HepG2 (cell line): ENCODE measurements at regions of chr3 and their contacts with region 1.

Region 1: GRCh38 chr3:157130467-157131251 is 29.3 kb downstream of the CCNL1 start:
- DNase-seq: peak; percentile 90
- ATAC-seq: peak; percentile 47
- H3K4me3 ChIP-seq: peak overlapping the region; percentile 53 to 76 (median 57)
- H3K27ac ChIP-seq: peak overlapping the region; percentile 96
- H3K4me1 ChIP-seq: peaks cover 95% of the 10 kb centered on the region
- H3K27me3 ChIP-seq: no peaks in the 10 kb centered on the region
- CTCF ChIP-seq: peak; percentile 80
- EP300 ChIP-seq: peak in 1 of 2 experiments; percentile 82; a peak in 2 of 4 replicates
- POLR2A ChIP-seq: peak in 1 of 2 experiments; percentile 50; a peak in 1 of 4 replicates
- RAD21 ChIP-seq: peak; percentile 82

Region 2: DNA sequence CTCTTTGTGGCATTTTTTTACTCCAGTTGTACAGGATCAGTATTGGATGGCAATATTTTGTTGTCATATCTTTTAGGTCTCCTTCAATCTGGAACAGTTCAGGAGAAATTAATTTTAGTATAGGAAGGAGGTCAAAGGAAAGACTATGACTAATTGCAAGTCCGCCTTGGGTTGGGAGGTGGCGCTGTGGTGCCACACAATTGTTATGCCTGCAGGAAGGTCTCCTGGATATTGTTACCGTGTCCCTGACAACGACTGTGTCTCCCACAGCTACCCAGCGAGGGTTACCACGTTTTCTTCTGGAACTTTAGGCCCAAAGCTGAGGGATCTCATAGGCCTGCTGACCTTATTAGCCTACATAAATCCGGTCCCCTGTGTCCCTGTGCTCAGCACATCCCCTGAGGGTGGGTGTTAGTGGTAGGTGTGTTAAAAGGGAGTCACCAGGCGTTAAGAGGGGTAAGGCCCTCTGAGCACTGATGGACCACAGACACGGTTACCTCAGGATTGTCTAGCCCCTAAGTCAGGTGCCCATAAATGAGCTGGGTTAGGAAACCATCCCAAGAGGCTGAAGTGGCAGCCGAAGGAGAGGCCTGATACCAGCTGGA is 978.7 kb before region 1 on chr3:
- CTCF ChIA-PET with region 1: no interaction called
- POLR2A ChIA-PET with region 1: no interaction called
- in situ Hi-C with region 1: loop called (anchors 10 kb)
- intact Hi-C with region 1: loop called (anchors 5 kb)
- DNase-seq: peak; percentile 35
- ATAC-seq: peak; percentile 93
- H3K4me3 ChIP-seq: no peak overlapping the region
- H3K27ac ChIP-seq: no peak overlapping the region
- H3K4me1 ChIP-seq: no peaks in the 10 kb centered on the region
- H3K27me3 ChIP-seq: no peaks in the 10 kb centered on the region
- CTCF ChIP-seq: peak; percentile 85
- EP300 ChIP-seq: no peak
- POLR2A ChIP-seq: no peak
- RAD21 ChIP-seq: peak; percentile 76

Region 3: DNA sequence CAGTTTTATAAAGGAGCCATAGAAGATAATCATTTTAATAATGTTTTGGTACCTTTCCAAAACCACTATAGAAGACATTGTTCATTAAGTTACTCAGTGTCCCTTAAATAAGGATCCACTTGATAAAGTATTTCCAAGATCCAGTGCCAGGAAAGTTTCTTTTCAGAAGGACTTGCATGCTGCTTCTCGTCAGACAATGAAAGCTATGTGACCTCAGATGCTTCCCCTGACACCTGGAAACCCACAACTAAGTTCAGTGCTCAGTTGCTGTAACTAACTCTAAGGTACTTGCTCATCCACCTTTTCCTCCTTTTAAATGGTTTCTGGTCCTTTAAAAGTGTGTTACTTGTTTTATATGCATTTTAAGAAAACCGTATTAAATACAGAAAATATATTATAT is 583.0 kb before region 1 on chr3:
- CTCF ChIA-PET with region 1: no interaction called
- POLR2A ChIA-PET with region 1: no interaction called
- in situ Hi-C with region 1: loop called (anchors 10 kb)
- intact Hi-C with region 1: no loop called
- DNase-seq: no peak
- ATAC-seq: no peak
- H3K4me3 ChIP-seq: no peak overlapping the region
- H3K27ac ChIP-seq: no peak overlapping the region
- H3K4me1 ChIP-seq: peaks cover 70% of the 10 kb centered on the region
- H3K27me3 ChIP-seq: no peaks in the 10 kb centered on the region; a peak in 1 of 5 replicates
- CTCF ChIP-seq: no peak
- EP300 ChIP-seq: no peak
- POLR2A ChIP-seq: no peak
- RAD21 ChIP-seq: no peak

Region 4: GRCh38 chr3:156892701-156893100 is 238.0 kb before region 1 on chr3:
- CTCF ChIA-PET with region 1: no interaction called
- POLR2A ChIA-PET with region 1: no interaction called
- in situ Hi-C with region 1: no loop called
- intact Hi-C with region 1: loop called (anchors 10 kb)
- DNase-seq: peak; percentile 5
- ATAC-seq: no peak
- H3K4me3 ChIP-seq: no peak overlapping the region
- H3K27ac ChIP-seq: no peak overlapping the region
- H3K4me1 ChIP-seq: peaks cover 6% of the 10 kb centered on the region; the same call in 1 of the 2 replicates
- H3K27me3 ChIP-seq: no peaks in the 10 kb centered on the region
- CTCF ChIP-seq: no peak
- EP300 ChIP-seq: no peak
- POLR2A ChIP-seq: no peak
- RAD21 ChIP-seq: no peak

Region 5: DNA sequence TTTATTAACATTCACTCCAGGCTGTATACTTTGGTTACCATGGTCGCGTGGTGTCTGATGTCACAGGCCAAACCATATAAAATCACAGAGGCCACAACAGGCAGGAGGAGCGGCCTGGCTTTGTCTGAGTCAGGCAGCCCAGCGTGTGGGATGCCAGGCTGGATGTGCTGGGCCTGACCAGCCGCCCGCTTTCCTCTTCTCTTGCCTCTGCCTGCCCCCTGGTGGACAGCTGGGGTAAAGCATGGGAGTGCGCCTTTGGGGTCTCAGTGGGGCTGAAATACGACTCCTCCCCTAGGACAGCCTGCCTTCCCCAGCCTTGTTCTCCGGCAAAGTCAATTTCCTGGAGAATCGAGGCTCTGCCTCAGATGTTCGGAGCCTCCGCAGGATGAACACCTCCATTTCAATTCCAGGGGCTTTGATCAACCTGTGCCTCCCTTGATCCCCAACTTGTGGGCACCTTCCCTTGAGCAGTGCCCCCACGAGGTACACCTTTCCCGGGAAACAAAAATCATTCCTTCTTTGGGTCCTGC is 48.9 kb before region 1 on chr3:
- CTCF ChIA-PET with region 1: interaction called, 4 read pairs
- POLR2A ChIA-PET with region 1: interaction called, 204 read pairs
- in situ Hi-C with region 1: no loop called
- intact Hi-C with region 1: loop called (anchors 1 kb)
- DNase-seq: peak; percentile 68
- ATAC-seq: peak; percentile 83
- H3K4me3 ChIP-seq: peak overlapping the region in 1 of 3 experiments; percentile 36; a peak in 1 of 6 replicates
- H3K27ac ChIP-seq: no peak overlapping the region
- H3K4me1 ChIP-seq: peaks cover 27% of the 10 kb centered on the region
- H3K27me3 ChIP-seq: no peaks in the 10 kb centered on the region
- CTCF ChIP-seq: peak; percentile 97
- EP300 ChIP-seq: no peak; a peak in 1 of 4 replicates
- POLR2A ChIP-seq: no peak
- RAD21 ChIP-seq: peak; percentile 96

Region 6: GRCh38 chr3:157099326-157100095 is 31.1 kb before region 1 on chr3:
- CTCF ChIA-PET with region 1: no interaction called
- POLR2A ChIA-PET with region 1: interaction called, 15 read pairs
- in situ Hi-C with region 1: loop called (anchors 5 kb)
- intact Hi-C with region 1: no loop called
- DNase-seq: no peak
- ATAC-seq: no peak
- H3K4me3 ChIP-seq: no peak overlapping the region
- H3K27ac ChIP-seq: no peak overlapping the region
- H3K4me1 ChIP-seq: peaks cover 45% of the 10 kb centered on the region
- H3K27me3 ChIP-seq: no peaks in the 10 kb centered on the region
- CTCF ChIP-seq: no peak
- EP300 ChIP-seq: no peak
- POLR2A ChIP-seq: no peak
- RAD21 ChIP-seq: no peak

Region 7: GRCh38 chr3:157159762-157160657 is 29.4 kb after region 1 on chr3 and contains the start of gene CCNL1:
- CTCF ChIA-PET with region 1: no interaction called
- POLR2A ChIA-PET with region 1: interaction called, 20 read pairs
- in situ Hi-C with region 1: no loop called
- intact Hi-C with region 1: loop called (anchors 1 kb)
- DNase-seq: peak; percentile 88
- ATAC-seq: peak; percentile 87
- H3K4me3 ChIP-seq: peak within 1 kb of the TSS; percentile 94 to 99 (median 98)
- H3K27ac ChIP-seq: peak within 1 kb of the TSS; percentile 100
- H3K4me1 ChIP-seq: peaks cover 64% of the 10 kb centered on the region
- H3K27me3 ChIP-seq: no peaks in the 10 kb centered on the region
- CTCF ChIP-seq: 0 out of 2 replicates have a peak, but pooled peaks have one; percentile 15
- EP300 ChIP-seq: peak; percentile 58 to 70; a peak in 3 of 4 replicates
- POLR2A ChIP-seq: peak; percentile 97 to 99
- RAD21 ChIP-seq: peak; percentile 64
- total RNA-seq, gene CCNL1: 23.5 and 151 TPM in 2 replicates